Mammary epithelial cell (primary cell): ENCODE measurements at regions of chr19 and their contacts with region 1.

Region 1: DNA sequence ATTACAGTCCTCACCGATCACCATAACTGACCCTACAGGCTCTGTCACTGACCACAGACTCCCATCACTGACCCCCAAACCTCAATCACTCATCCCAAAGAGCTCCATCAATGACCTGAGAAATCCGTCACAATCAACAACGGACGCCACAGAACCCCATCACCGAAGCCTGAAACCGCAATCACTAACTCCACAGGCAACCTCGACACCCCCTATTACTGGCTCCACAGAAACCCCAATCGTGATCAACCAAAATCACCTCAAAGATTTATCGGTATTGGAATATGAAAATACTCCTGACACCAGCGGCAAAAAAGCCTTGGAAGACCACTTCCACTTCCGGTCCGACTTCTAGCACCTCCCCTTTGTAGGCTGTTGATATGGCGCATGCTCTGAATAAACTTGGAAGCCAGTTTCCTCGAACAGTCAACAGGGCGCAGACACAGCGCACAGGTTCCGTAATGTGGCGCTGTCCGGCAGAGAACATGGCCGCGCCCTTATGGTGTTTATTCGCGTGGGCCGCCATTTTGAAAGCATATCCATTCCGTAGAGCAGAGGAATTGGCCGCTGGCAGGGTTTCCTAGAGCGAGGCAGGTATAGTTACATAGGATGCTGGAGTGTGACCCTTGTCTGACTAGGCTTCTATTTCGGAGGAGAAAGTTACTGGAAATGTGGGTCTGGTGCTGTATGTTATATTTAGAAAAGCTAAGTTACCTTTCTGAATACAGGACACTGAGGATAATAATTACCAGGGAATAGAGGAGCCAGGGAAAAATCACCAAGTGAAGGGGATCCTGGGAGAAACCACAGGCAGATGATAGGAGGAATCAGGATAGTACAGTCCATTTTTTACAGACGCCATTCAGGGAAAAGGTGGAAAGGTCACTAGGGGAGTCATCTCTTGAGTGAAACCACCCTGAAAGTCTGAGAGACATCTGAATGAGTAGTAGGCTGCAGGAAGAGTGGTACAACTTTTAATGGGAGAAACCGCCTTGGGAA is at the start of gene ZNF585A:
- DNase-seq: peak; percentile 95
- H3K4me3 ChIP-seq: peak within 1 kb of the TSS; percentile 51 to 97 (median 91)
- H3K27ac ChIP-seq: peak within 1 kb of the TSS; percentile 46
- H3K4me1 ChIP-seq: no peaks in the 10 kb centered on the region
- H3K27me3 ChIP-seq: no peaks in the 10 kb centered on the region
- CTCF ChIP-seq: peak in 1 of 2 donors; percentile 41
- total RNA-seq, gene ZNF585A: 10.4 to 13.7 TPM

Region 2: DNA sequence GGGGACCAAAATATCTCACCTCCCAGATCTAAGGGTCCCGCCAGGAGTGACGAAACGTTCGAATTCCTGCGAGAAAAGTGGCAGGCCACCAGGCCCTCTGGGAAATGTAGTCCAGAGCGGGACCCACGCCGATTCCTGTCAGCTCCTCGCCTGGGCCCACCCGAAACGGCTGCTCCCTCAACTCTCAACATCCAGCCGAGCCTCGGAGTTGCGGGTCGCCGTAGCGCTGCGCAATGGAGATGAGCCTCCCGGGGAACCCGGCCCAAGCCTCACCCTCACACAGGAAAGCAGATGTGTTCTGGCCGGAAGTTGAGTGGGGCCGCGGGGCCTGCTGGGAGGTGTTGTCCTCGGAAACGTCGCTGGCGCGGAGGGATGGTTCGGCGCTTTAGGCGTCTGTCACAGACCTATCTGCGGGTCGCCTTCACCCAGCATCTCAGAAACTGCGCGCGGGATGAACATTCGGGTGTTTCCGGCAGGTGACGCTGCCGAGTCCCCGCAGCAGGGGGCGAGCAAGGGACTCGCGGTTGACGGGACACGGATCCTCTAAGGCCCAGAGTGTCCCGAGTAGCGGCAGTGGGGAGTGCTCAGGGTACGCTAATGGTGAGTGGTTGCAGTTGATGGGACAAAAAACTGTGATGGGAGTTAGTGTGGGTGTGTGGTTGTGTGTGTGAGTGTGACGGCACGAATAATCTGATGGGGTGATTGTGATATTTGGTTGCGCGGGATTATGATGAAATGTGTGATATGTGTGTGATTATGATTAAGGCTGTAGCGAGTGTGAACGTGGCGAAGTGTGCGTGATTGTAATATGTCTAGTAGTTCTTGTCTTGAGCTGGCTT is 256.5 kb before region 1 on chr19 and contains the starts of genes ZNF568 and ZNF829:
- CTCF ChIA-PET with region 1: no interaction called
- dilution Hi-C with region 1: no loop called
- in situ Hi-C with region 1: no loop called
- intact Hi-C with region 1: loop called (anchors 2 kb)
- DNase-seq: peak; percentile 89
- H3K4me3 ChIP-seq: peak within 1 kb of the TSS; percentile 44 to 81 (median 75)
- H3K27ac ChIP-seq: peak within 1 kb of the TSS; percentile 64
- H3K4me1 ChIP-seq: no peaks in the 10 kb centered on the region
- H3K27me3 ChIP-seq: no peaks in the 10 kb centered on the region
- CTCF ChIP-seq: peak; percentile 31 to 73
- total RNA-seq, gene ZNF568: 9.4 to 15.7 TPM
- total RNA-seq, gene ZNF829: 5.1 to 6.0 TPM

Region 3: GRCh38 chr19:37077934-37078725 is 94.5 kb before region 1 on chr19 and contains the start of gene ZNF420:
- CTCF ChIA-PET with region 1: no interaction called
- dilution Hi-C with region 1: no loop called
- in situ Hi-C with region 1: no loop called
- intact Hi-C with region 1: loop called (anchors 5 kb)
- DNase-seq: peak; percentile 94
- H3K4me3 ChIP-seq: peak within 1 kb of the TSS; percentile 74 to 91 (median 87)
- H3K27ac ChIP-seq: peak within 1 kb of the TSS; percentile 41
- H3K4me1 ChIP-seq: peaks cover 8% of the 10 kb centered on the region
- H3K27me3 ChIP-seq: no peaks in the 10 kb centered on the region
- CTCF ChIP-seq: no peak
- total RNA-seq, gene ZNF420: 4.1 to 9.0 TPM

Region 4: GRCh38 chr19:37829526-37829925 is 656.9 kb after region 1 on chr19:
- CTCF ChIA-PET with region 1: no interaction called
- dilution Hi-C with region 1: no loop called
- in situ Hi-C with region 1: no loop called
- intact Hi-C with region 1: no loop called
- DNase-seq: no peak
- H3K4me3 ChIP-seq: no peak overlapping the region
- H3K27ac ChIP-seq: no peak overlapping the region
- H3K4me1 ChIP-seq: no peaks in the 10 kb centered on the region
- H3K27me3 ChIP-seq: no peaks in the 10 kb centered on the region
- CTCF ChIP-seq: no peak